B cell (primary cell): ENCODE measurements at regions of chr6 and their contacts with region 1.

Region 1: DNA sequence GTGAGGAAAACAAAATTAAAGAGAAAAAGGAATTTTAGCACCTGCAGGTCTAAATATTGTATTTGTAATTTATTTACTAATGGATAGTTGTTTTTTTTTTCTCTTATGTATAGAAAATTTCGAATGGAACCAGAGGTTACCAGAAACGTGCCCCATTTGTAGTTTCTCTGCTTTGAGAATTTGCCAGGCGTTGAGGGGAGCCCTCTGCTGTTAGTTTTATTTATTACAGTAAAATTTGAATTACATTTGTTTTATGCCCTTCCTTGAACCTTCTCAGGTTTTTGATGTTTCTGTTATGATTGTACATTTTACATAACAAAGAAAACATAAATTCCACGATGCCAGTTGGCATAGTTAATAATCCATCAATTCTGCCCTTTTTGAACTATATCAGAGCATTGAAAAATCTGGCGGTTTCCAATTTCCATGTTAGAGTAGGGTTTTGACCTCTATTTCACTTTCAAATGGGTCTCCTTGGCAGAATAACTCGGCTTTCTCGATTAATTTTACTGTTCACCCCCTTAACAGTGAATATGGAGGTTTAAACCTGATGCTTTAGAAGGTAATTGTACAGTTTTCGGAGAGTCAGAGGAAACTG is 35.1 kb upstream of the RFPL4B start:
- DNase-seq: peak; percentile 25
- ATAC-seq: no peak
- H3K4me3 ChIP-seq: no peak overlapping the region
- H3K4me3 Mint-ChIP-seq: no peak overlapping the region
- H3K27ac ChIP-seq: no peak overlapping the region
- H3K27ac Mint-ChIP-seq: no peak overlapping the region
- H3K4me1 ChIP-seq: peaks cover 10 to 11% of the 10 kb centered on the region in 2 donors
- H3K4me1 Mint-ChIP-seq: peaks cover 14% of the 10 kb centered on the region
- H3K27me3 ChIP-seq: no peaks in the 10 kb centered on the region
- H3K27me3 Mint-ChIP-seq: no peaks in the 10 kb centered on the region
- CTCF ChIP-seq: peak; percentile 79

Region 2: DNA sequence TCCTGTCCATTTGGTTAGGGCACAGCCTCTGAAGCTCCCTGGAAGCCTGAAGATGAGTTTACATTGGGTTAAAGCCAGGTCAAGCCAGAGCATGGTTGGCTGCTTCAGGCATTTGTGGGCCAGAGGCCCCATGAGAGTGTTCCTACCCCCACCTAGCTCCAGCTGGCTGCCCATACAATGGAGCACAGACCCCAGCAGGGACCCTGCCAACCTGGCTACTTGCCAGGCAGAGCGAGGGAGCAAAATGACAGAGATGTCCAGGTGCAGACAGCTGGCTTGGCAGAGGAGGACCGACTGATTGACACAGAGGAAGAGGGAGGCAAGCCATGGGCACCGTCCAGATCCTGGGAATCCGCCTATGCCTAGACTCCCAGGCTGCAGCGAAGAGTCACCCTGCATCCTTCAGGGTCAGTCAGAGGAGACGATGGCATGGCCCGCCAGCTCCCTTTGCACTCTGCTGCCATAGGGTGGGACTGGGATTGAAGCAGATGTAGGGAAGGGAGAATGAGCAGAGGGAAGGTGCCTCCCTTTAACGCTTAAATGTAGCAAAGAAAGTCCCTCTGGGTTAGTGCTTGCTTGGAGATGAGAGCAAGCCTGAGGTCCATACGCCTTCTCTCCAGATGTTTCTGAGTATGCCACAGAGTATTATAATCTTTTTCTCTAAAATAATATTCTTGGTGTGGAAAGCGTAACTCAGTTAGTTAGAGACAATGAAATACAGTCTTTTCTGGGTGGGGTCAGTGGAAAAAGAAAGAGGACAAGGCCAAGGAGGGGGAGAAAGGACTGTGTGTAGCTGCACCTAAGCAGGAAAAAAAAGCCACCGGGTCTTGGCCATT is 361.2 kb before region 1 on chr6:
- CTCF ChIA-PET with region 1: no interaction called
- POLR2A ChIA-PET with region 1: no interaction called
- intact Hi-C with region 1: no loop called
- DNase-seq: no peak
- ATAC-seq: no peak
- H3K4me3 ChIP-seq: no peak overlapping the region
- H3K4me3 Mint-ChIP-seq: no peak overlapping the region
- H3K27ac ChIP-seq: no peak overlapping the region
- H3K27ac Mint-ChIP-seq: no peak overlapping the region
- H3K4me1 ChIP-seq: no peaks in the 10 kb centered on the region
- H3K4me1 Mint-ChIP-seq: no peaks in the 10 kb centered on the region
- H3K27me3 ChIP-seq: peaks cover 0 to 6% (median 0%) of the 10 kb centered on the region in 4 experiments
- H3K27me3 Mint-ChIP-seq: peaks cover 27% of the 10 kb centered on the region
- CTCF ChIP-seq: no peak

Region 3: GRCh38 chr6:112296122-112296521 is 15.9 kb before region 1 on chr6:
- CTCF ChIA-PET with region 1: interaction called, 12 read pairs
- POLR2A ChIA-PET with region 1: no interaction called
- intact Hi-C with region 1: no loop called
- DNase-seq: no peak
- ATAC-seq: no peak
- H3K4me3 ChIP-seq: no peak overlapping the region
- H3K4me3 Mint-ChIP-seq: no peak overlapping the region
- H3K27ac ChIP-seq: no peak overlapping the region
- H3K27ac Mint-ChIP-seq: no peak overlapping the region
- H3K4me1 ChIP-seq: no peaks in the 10 kb centered on the region
- H3K4me1 Mint-ChIP-seq: no peaks in the 10 kb centered on the region
- H3K27me3 ChIP-seq: peaks cover 0 to 8% (median 2%) of the 10 kb centered on the region in 4 experiments
- H3K27me3 Mint-ChIP-seq: peaks cover 17% of the 10 kb centered on the region
- CTCF ChIP-seq: no peak

Region 4: GRCh38 chr6:112337209-112337638 is 25.2 kb after region 1 on chr6:
- CTCF ChIA-PET with region 1: no interaction called
- POLR2A ChIA-PET with region 1: no interaction called
- intact Hi-C with region 1: no loop called
- DNase-seq: no peak
- ATAC-seq: no peak
- H3K4me3 ChIP-seq: no peak overlapping the region
- H3K4me3 Mint-ChIP-seq: no peak overlapping the region
- H3K27ac ChIP-seq: no peak overlapping the region
- H3K27ac Mint-ChIP-seq: no peak overlapping the region
- H3K4me1 ChIP-seq: no peaks in the 10 kb centered on the region
- H3K4me1 Mint-ChIP-seq: no peaks in the 10 kb centered on the region
- H3K27me3 ChIP-seq: peaks cover 0 to 5% (median 0%) of the 10 kb centered on the region in 4 experiments
- H3K27me3 Mint-ChIP-seq: peaks cover 12% of the 10 kb centered on the region
- CTCF ChIP-seq: no peak